A549 (cell line): ENCODE measurements at regions of chr2 and their contacts with region 1.

Region 1: GRCh38 chr2:10911261-10912075 is at the start of gene KCNF1:
- DNase-seq: peak; percentile 79 to 83
- ATAC-seq: peak; percentile 75 to 82
- H3K4me3 ChIP-seq: peak within 1 kb of the TSS; percentile 57
- H3K27ac ChIP-seq: peak within 1 kb of the TSS; percentile 79 to 93
- H3K4me1 ChIP-seq: peaks cover 13% of the 10 kb centered on the region
- CTCF ChIP-seq: peak; percentile 52
- EP300 ChIP-seq: no peak
- POLR2A ChIP-seq: peak; percentile 38
- RAD21 ChIP-seq: peak; percentile 54 to 74
- polyA plus RNA-seq, gene KCNF1: 4.4 and 5.6 TPM in 2 replicates

Region 2: GRCh38 chr2:10810202-10811161 is 101.0 kb before region 1 on chr2:
- CTCF ChIA-PET with region 1: no interaction called
- POLR2A ChIA-PET with region 1: no interaction called
- DNase-seq: no peak
- ATAC-seq: no peak
- H3K4me3 ChIP-seq: peak overlapping the region; percentile 85; the same call in 2 of the 3 replicates
- H3K27ac ChIP-seq: 0 out of 6 replicates have a peak overlapping the region, but pooled peaks of 1 of the 2 experiments have one; percentile 93
- H3K4me1 ChIP-seq: peaks cover 20% of the 10 kb centered on the region
- CTCF ChIP-seq: no peak
- EP300 ChIP-seq: no peak
- POLR2A ChIP-seq: no peak
- RAD21 ChIP-seq: no peak

Region 3: DNA sequence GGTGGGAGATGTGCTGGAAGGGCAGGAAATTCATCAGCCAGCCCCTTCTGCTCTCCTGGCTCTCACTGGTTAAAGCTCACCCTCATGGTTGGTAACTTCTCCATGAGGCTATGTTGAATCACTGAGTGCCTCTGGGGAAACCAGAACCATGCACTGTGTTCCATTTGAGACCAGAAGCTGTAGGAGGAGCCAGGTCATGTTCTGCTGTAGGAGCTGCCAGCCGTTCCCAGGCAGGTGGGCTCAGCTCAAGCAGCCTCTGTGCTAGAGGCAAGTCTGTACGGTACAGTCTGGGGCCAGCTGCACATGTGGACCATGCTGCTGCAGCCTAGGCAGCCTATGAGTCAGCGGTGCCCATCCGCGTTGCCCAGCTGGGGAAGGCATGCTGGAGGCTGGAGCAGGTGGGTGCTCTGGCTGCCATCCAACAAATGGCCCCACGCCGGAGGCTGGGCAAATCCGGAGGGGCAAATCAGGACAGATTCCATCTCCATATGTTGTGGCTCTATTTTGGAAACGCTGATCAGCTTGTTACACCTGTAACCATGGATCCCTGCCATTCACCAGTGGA is 21.7 kb before region 1 on chr2:
- CTCF ChIA-PET with region 1: interaction called, 13 read pairs
- POLR2A ChIA-PET with region 1: no interaction called
- DNase-seq: no peak
- ATAC-seq: peak; percentile 14 to 38; a peak in 2 of 6 replicates
- H3K4me3 ChIP-seq: no peak overlapping the region
- H3K27ac ChIP-seq: no peak overlapping the region
- H3K4me1 ChIP-seq: peaks cover 4% of the 10 kb centered on the region
- CTCF ChIP-seq: no peak
- EP300 ChIP-seq: no peak
- POLR2A ChIP-seq: no peak
- RAD21 ChIP-seq: no peak

Region 4: GRCh38 chr2:10900216-10901109 is 11.0 kb before region 1 on chr2:
- CTCF ChIA-PET with region 1: interaction called, 51 read pairs
- POLR2A ChIA-PET with region 1: no interaction called
- DNase-seq: peak; percentile 61 to 75
- ATAC-seq: peak; percentile 79 to 92
- H3K4me3 ChIP-seq: no peak overlapping the region
- H3K27ac ChIP-seq: peak overlapping the region; percentile 48 to 51; a peak in 5 of 6 replicates
- H3K4me1 ChIP-seq: peaks cover 22% of the 10 kb centered on the region
- CTCF ChIP-seq: peak; percentile 42
- EP300 ChIP-seq: no peak
- POLR2A ChIP-seq: no peak
- RAD21 ChIP-seq: peak; percentile 23 to 48; a peak in 3 of 5 replicates

Region 5: DNA sequence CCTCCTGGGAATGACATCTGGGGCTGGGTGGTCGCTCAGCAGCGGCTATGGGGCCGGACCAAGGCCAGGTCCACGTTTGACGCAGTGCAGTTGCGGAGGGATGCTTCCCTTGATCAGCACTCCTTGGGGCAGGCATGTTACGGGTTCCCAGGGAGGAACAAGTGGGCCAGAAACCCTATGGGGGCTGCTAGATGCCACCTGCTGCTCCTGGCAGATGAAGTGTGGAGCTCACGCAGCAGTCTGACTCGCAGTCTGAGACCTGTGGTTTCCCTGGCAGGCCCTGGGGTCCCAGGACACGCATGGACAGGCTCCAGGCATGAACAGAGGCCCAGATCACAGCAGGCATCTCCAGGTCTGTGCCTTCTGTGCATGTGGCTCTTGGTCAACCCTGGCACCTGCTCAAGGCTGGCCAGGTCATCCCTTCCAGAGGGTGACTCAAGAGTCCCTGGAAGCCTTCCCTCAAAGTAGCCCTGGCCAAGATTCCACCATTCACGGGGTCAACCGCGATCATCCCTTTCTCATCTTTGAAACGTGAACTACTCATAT is 20.3 kb after region 1 on chr2:
- CTCF ChIA-PET with region 1: interaction called, 120 read pairs
- POLR2A ChIA-PET with region 1: interaction called, 7 read pairs
- DNase-seq: no peak
- ATAC-seq: no peak
- H3K4me3 ChIP-seq: no peak overlapping the region
- H3K27ac ChIP-seq: peak overlapping the region; percentile 87 to 93; a peak in 4 of 6 replicates
- H3K4me1 ChIP-seq: peaks cover 46% of the 10 kb centered on the region
- CTCF ChIP-seq: no peak
- EP300 ChIP-seq: no peak
- POLR2A ChIP-seq: no peak
- RAD21 ChIP-seq: no peak